Sigmoid colon (tissue), 7 donors: ENCODE measurements at regions of chr2 and their contacts with region 1.

Region 1: GRCh38 chr2:219530048-219530963 is 13.3 kb downstream of the CHPF start:
- DNase-seq: peak; percentile 93
- H3K4me3 ChIP-seq: peak overlapping the region in 2 of 4 donors; percentile 19 to 24
- H3K27ac ChIP-seq: peak overlapping the region in 1 of 4 donors; percentile 34
- H3K4me1 ChIP-seq: peaks cover 0 to 9% (median 3%) of the 10 kb centered on the region in 4 donors
- H3K27me3 ChIP-seq: no peaks in the 10 kb centered on the region
- CTCF ChIP-seq: peak; percentile 96 to 98 (median 98)
- EP300 ChIP-seq: no peak
- POLR2A ChIP-seq: no peak

Region 2: DNA sequence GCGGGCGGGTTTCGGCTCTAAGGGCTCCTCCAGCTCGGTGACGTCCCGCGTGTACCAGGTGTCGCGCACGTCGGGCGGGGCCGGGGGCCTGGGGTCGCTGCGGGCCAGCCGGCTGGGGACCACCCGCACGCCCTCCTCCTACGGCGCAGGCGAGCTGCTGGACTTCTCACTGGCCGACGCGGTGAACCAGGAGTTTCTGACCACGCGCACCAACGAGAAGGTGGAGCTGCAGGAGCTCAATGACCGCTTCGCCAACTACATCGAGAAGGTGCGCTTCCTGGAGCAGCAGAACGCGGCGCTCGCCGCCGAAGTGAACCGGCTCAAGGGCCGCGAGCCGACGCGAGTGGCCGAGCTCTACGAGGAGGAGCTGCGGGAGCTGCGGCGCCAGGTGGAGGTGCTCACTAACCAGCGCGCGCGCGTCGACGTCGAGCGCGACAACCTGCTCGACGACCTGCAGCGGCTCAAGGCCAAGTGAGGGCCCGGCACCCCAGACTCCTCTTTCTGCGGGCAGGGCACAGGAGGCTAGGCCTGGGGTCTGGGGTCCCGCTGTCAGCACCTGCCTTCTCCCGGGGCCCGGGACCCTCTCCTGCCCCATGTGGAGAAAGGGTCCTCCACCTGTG is 111.6 kb before region 1 on chr2:
- intact Hi-C with region 1: no loop called
- DNase-seq: no peak
- H3K4me3 ChIP-seq: peak overlapping the region; percentile 60 to 93 (median 83)
- H3K27ac ChIP-seq: peak overlapping the region; percentile 94 to 99 (median 98)
- H3K4me1 ChIP-seq: peaks cover 0 to 52% (median 38%) of the 10 kb centered on the region in 4 donors
- H3K27me3 ChIP-seq: peaks cover 0 to 11% (median 0%) of the 10 kb centered on the region in 3 donors
- CTCF ChIP-seq: no peak
- EP300 ChIP-seq: no peak
- POLR2A ChIP-seq: no peak

Region 3: GRCh38 chr2:219475697-219476651 is 54.3 kb before region 1 on chr2:
- intact Hi-C with region 1: loop called (anchors 1 kb)
- DNase-seq: peak; percentile 90
- H3K4me3 ChIP-seq: peak overlapping the region in 1 of 4 donors; percentile 6
- H3K27ac ChIP-seq: peak overlapping the region; percentile 58 to 99 (median 99)
- H3K4me1 ChIP-seq: peaks cover 0 to 34% (median 24%) of the 10 kb centered on the region in 4 donors
- H3K27me3 ChIP-seq: no peaks in the 10 kb centered on the region
- CTCF ChIP-seq: peak; percentile 85 to 89 (median 86)
- EP300 ChIP-seq: no peak
- POLR2A ChIP-seq: no peak